Activated CD4-positive, alpha-beta T cell treated with anti-CD3 and anti-CD28 coated beads, Interleukin-2, amount 10 ng/mL, durations not matched to agents 7 days and 5 days (primary cell): ENCODE measurements at regions of chr4 and their contacts with region 1.

Region 1: DNA sequence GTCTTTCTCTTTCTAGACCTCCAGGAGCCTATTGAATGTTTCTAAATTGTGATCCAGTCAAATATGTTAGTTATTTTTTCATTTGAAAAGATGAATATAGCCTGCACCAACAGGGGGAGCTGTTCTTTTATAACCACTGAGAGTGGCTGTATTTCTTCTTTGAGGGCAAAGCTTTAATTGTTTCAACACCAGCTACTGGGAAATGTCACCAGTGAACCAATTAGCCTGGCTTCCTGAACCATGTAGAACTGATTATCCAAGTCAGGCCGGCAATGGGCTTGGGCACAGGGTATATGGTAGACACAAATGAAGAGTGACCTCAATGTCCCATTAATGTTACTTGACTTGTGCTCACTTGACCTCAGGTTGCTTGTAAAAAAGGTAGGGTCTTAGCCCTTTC is 4.8 kb upstream of the DAPP1 start:
- DNase-seq: peak; percentile 76
- H3K4me3 Mint-ChIP-seq: no peak overlapping the region
- H3K27ac Mint-ChIP-seq: no peak overlapping the region
- H3K4me1 Mint-ChIP-seq: peaks cover 38% of the 10 kb centered on the region
- H3K27me3 Mint-ChIP-seq: peaks cover 3% of the 10 kb centered on the region

Region 2: GRCh38 chr4:99655308-99656081 is 156.4 kb before region 1 on chr4:
- CTCF ChIA-PET with region 1: no interaction called
- POLR2A ChIA-PET with region 1: no interaction called
- DNase-seq: no peak
- H3K4me3 Mint-ChIP-seq: no peak overlapping the region
- H3K27ac Mint-ChIP-seq: no peak overlapping the region
- H3K4me1 Mint-ChIP-seq: no peaks in the 10 kb centered on the region
- H3K27me3 Mint-ChIP-seq: peaks cover 3% of the 10 kb centered on the region

Region 3: GRCh38 chr4:99847362-99847976 is 35.6 kb after region 1 on chr4:
- CTCF ChIA-PET with region 1: interaction called, 11 read pairs
- POLR2A ChIA-PET with region 1: interaction called, 5 read pairs
- DNase-seq: peak; percentile 47
- H3K4me3 Mint-ChIP-seq: peak overlapping the region; percentile 55
- H3K27ac Mint-ChIP-seq: peak overlapping the region; percentile 97
- H3K4me1 Mint-ChIP-seq: peaks cover 77% of the 10 kb centered on the region
- H3K27me3 Mint-ChIP-seq: no peaks in the 10 kb centered on the region

Region 4: DNA sequence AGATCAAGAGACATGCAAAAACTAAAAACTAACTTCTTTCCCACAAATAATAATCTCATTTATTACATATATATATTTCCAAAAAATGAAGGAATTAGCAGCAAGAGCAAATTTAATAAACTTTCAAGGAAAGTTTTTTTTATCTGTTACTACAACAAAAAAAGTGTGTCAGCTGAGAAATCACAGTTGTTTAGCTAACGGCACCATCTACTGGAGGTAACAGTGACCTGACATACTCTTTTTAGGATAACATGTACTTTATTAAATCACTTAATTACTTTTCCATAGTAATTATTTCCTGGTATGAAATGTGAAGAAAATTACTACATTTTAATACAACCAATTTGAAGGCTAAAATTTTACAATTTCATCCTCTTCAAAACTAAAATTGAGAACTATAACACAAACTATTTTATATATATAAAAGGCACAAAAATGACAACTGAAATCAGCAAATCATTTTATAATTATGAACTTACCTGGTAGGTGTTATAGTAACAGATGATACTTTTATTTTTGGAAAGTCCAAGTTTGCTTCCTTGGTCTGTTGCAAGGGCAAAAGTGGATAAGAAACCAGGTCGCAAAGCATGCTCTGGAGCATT is 73.3 kb after region 1 on chr4:
- CTCF ChIA-PET with region 1: interaction called, 15 read pairs
- POLR2A ChIA-PET with region 1: no interaction called
- DNase-seq: peak; percentile 63
- H3K4me3 Mint-ChIP-seq: no peak overlapping the region
- H3K27ac Mint-ChIP-seq: no peak overlapping the region
- H3K4me1 Mint-ChIP-seq: peaks cover 10% of the 10 kb centered on the region
- H3K27me3 Mint-ChIP-seq: no peaks in the 10 kb centered on the region

Region 5: DNA sequence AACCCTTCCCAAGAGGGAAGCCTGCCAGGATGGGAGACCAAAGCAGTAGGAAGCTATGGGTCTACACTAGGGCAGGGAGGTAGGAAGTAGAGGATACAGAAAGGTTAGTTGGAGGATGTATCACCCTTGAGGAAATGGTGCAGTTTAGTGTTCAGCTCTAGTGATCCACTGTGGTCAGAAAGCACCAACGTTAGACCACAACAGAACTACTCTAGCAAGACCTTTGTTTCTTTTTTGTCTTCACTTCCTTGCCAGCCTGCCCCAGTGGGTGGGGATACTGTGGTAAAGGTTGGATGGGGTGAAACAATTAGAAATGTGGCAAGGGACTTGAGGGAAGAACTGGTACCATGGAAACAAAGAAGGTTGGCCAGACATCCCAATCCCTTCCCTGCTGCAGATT is 295.1 kb after region 1 on chr4:
- CTCF ChIA-PET with region 1: no interaction called
- POLR2A ChIA-PET with region 1: no interaction called
- DNase-seq: peak; percentile 67
- H3K4me3 Mint-ChIP-seq: peak overlapping the region; percentile 15
- H3K27ac Mint-ChIP-seq: peak overlapping the region; percentile 78
- H3K4me1 Mint-ChIP-seq: peaks cover 28% of the 10 kb centered on the region
- H3K27me3 Mint-ChIP-seq: no peaks in the 10 kb centered on the region